PC-3 (cell line): ENCODE measurements at regions of chr1 and their contacts with region 1.

Region 1: GRCh38 chr1:25037174-25038074 is 107.3 kb upstream of the RUNX3 start:
- DNase-seq: peak; percentile 68
- ATAC-seq: peak; percentile 48
- H3K4me3 ChIP-seq: no peak overlapping the region
- H3K27ac ChIP-seq: no peak overlapping the region
- H3K4me1 ChIP-seq: peaks cover 8% of the 10 kb centered on the region
- H3K27me3 ChIP-seq: 0 out of 2 replicates have a peak, but pooled peaks cover 14% of the 10 kb centered on the region
- CTCF ChIP-seq: peak; percentile 82

Region 2: DNA sequence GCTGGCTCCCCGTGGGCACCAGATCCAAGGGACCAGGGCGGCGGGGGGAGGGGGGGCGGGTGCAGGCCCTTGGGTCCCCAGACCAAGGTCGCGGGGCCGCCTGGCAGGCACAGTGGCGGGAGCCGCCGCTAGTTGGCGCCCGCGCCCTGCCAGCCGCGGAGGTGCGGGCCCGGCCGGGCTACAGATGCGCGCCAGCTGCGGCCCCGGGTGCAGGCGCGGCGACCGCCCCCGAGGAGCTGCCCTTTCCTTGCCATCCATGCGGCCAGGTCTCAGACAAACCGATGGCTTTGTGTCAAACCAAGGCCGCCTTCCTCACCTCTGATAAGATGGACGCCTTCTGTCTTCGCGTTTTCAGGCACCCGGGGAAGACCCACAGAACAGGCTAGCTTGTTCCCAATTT is 105.1 kb before region 1 on chr1:
- CTCF ChIA-PET with region 1: interaction called, 7 read pairs
- POLR2A ChIA-PET with region 1: no interaction called
- intact Hi-C with region 1: loop called (anchors 1 kb)
- DNase-seq: peak; percentile 54
- ATAC-seq: peak; percentile 80
- H3K4me3 ChIP-seq: 0 out of 2 replicates have a peak overlapping the region, but pooled peaks have one; percentile 22
- H3K27ac ChIP-seq: no peak overlapping the region
- H3K4me1 ChIP-seq: no peaks in the 10 kb centered on the region
- H3K27me3 ChIP-seq: peaks cover 45% of the 10 kb centered on the region
- CTCF ChIP-seq: peak; percentile 42; the same call in 1 of the 2 replicates

Region 3: GRCh38 chr1:24987875-24988557 is 49.4 kb before region 1 on chr1:
- CTCF ChIA-PET with region 1: no interaction called
- POLR2A ChIA-PET with region 1: no interaction called
- intact Hi-C with region 1: loop called (anchors 10 kb)
- DNase-seq: no peak
- ATAC-seq: no peak
- H3K4me3 ChIP-seq: no peak overlapping the region
- H3K27ac ChIP-seq: no peak overlapping the region
- H3K4me1 ChIP-seq: no peaks in the 10 kb centered on the region
- H3K27me3 ChIP-seq: peaks cover 46% of the 10 kb centered on the region
- CTCF ChIP-seq: no peak

Region 4: GRCh38 chr1:25727635-25728330 is 690.4 kb after region 1 on chr1:
- CTCF ChIA-PET with region 1: no interaction called
- POLR2A ChIA-PET with region 1: no interaction called
- intact Hi-C with region 1: no loop called
- DNase-seq: no peak
- ATAC-seq: no peak
- H3K4me3 ChIP-seq: no peak overlapping the region
- H3K27ac ChIP-seq: no peak overlapping the region
- H3K4me1 ChIP-seq: no peaks in the 10 kb centered on the region
- H3K27me3 ChIP-seq: no peaks in the 10 kb centered on the region
- CTCF ChIP-seq: no peak